Esophagus squamous epithelium (tissue), 5 donors: ENCODE measurements at regions of chr22 and their contacts with region 1.

Region 1: GRCh38 chr22:30754971-30755756 is 60.5 kb downstream of the OSBP2 start:
- DNase-seq: no peak
- H3K4me3 ChIP-seq: no peak overlapping the region
- H3K27ac ChIP-seq: no peak overlapping the region
- H3K4me1 ChIP-seq: no peaks in the 10 kb centered on the region
- H3K27me3 ChIP-seq: no peaks in the 10 kb centered on the region
- CTCF ChIP-seq: peak in 5 of 6 experiments; percentile 58 to 80 (median 69)
- POLR2A ChIP-seq: no peak

Region 2: DNA sequence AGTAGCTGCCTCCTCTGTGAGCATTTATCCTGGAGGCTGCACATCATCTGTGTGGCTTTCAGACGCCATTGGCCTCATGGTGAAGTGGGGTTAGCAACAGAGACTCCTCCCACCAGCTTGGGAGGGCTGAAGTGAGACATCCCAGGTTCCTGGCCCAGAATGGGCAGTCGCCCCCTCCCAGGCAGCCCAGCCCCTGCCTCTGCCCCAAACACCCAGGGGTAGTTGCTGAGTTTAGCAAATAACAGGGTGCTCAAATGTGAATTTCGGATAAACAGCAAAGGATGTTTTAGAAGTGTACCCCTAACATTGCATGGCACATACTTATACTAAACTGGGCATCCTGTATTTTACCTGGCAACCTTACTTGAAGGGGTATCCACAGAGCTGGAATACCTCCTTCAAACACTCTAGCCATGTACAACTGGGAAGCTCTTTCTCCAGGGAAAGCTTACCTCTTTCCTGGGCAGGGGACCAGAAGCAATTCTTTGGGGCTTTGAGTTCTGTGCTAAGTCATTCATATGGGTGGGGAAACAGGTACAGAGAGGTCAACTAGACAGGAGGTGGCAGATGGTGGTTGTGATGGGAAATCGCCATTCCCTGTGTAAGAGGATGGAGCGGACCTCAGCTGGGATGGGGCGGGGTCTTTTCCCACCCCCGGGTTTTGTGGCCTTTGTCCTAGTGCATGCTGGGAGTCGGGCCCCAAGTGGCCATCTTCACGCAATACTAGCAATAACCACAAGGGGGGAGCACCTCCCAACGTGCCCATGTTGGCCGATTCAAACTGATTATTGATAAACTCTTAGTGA is 310.3 kb before region 1 on chr22:
- intact Hi-C with region 1: loop called (anchors 10 kb)
- DNase-seq: no peak
- H3K4me3 ChIP-seq: no peak overlapping the region
- H3K27ac ChIP-seq: peak overlapping the region in 3 of 4 donors; percentile 36 to 75 (median 74)
- H3K4me1 ChIP-seq: peaks cover 0 to 38% (median under 1%) of the 10 kb centered on the region in 3 donors
- H3K27me3 ChIP-seq: peaks cover 0 to 44% (median 0%) of the 10 kb centered on the region in 4 donors
- CTCF ChIP-seq: peak; percentile 48 to 88 (median 69)
- POLR2A ChIP-seq: no peak

Region 3: DNA sequence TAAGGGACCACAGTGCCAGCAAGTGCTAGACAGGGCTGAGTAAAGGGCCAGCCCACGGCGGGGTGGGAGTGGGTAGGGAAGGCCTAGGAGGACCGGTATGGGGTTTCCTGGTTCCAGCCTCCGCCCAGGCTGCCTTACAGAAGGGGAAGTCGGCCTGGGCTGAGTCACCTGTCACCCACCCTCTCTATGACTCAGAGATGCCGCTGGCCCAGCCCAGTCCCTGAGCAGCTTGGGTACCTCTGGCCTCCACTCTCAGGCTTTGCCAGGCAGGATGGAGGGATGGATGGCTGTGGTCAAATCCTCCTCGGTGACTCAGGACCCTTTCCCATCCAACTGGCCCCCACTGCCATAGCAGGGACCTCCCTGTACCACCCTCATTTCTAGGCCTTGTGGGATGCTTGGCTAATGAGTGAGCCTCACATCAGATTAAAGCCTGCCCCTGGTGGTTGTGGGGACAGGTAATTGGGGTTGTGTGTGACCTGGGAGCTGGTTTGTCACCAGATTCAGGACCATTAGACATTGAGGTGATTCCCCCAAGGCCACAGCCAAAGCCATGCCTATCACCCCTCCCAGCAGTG is 105.6 kb before region 1 on chr22:
- intact Hi-C with region 1: no loop called
- DNase-seq: peak; percentile 30
- H3K4me3 ChIP-seq: no peak overlapping the region
- H3K27ac ChIP-seq: peak overlapping the region in 3 of 4 donors; percentile 34 to 71 (median 62)
- H3K4me1 ChIP-seq: peaks cover 8 to 21% (median 11%) of the 10 kb centered on the region in 3 donors
- H3K27me3 ChIP-seq: no peaks in the 10 kb centered on the region
- CTCF ChIP-seq: peak in 1 of 6 experiments; percentile 41
- POLR2A ChIP-seq: no peak